ENCODE measurements at regions of chr1 and their contacts with region 1.

Region 1: DNA sequence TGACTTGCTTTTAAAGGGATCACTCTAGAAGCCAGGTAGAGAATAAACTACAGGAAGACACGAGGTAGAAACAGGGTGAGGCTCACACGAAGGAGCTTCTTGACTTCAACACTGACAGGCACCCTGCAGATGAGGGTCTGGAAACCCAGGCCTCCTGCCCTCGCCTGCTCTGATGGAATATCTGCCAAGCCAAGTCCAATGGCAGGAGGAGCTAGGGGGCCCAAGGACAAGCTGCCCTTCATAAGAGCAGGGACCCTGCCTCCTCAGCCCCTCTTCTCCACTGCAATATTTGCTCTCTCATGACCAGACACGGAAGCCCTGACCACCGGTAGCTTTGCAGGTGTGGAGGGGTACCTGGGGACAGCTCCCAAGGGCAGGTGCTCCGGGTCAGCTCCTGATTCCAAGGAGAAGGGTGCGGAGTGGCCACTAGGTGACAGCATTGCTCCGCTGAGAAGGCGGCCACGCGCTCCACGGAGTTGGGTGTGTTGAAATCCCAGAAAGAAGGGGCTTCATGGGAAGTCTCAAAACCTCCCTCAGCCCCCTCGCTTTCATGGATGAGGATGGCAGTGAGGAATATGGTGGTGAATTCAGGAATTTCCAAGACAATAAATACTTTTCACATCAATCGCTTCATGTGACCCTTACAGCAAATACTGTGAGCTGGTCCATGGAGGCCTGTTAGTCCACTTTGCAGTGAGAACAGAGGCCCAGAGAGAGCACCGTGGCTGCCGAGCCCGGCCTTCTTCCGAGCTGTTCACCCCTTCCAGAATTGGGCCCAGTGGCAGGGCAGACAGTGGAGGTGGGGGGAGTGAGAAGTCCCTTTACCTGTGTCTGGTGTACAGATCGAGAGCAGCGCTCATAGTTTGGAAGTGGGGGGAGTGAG is 33.2 kb upstream of the PAX7 start:
- DNase-seq: peak; percentile 46
- H3K4me3 ChIP-seq: no peak overlapping the region
- H3K27ac ChIP-seq: no peak overlapping the region
- H3K4me1 ChIP-seq: no peaks in the 10 kb centered on the region
- H3K27me3 ChIP-seq: peaks cover 0 to 3% of the 10 kb centered on the region in 2 experiments
- CTCF ChIP-seq: peak; percentile 71 to 92
- POLR2A ChIP-seq: no peak

Region 2: DNA sequence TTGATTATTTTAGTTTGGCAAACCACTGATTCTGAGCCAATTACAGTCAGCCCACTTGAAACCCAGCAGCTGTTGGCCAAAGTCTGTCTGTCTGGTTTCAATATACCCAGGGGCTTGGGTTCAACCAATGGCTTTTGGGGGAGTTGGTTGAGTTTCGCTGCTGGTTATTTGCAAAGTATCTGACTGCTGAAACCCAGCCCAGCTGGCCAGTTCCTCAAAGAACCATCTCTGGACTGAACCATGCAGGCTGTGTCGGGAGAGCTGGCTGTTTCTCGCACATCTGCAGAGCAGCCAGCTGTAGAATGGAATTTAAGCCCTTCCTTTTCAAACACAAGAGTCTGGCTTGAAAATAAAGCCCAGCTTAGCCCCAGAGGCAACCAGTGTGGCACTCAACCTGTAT is 32.7 kb before region 1 on chr1:
- CTCF ChIA-PET with region 1: no interaction called
- POLR2A ChIA-PET with region 1: no interaction called
- dilution Hi-C with region 1: no loop called
- intact Hi-C with region 1: no loop called
- DNase-seq: no peak
- H3K4me3 ChIP-seq: no peak overlapping the region
- H3K27ac ChIP-seq: no peak overlapping the region
- H3K4me1 ChIP-seq: no peaks in the 10 kb centered on the region
- H3K27me3 ChIP-seq: no peaks in the 10 kb centered on the region
- CTCF ChIP-seq: no peak
- POLR2A ChIP-seq: no peak

Region 3: GRCh38 chr1:18575620-18576019 is 21.8 kb before region 1 on chr1:
- CTCF ChIA-PET with region 1: interaction called, 12 read pairs
- POLR2A ChIA-PET with region 1: no interaction called
- dilution Hi-C with region 1: no loop called
- intact Hi-C with region 1: no loop called
- DNase-seq: peak; percentile 18
- H3K4me3 ChIP-seq: no peak overlapping the region
- H3K27ac ChIP-seq: no peak overlapping the region
- H3K4me1 ChIP-seq: no peaks in the 10 kb centered on the region
- H3K27me3 ChIP-seq: no peaks in the 10 kb centered on the region
- CTCF ChIP-seq: peak; percentile 39 to 75
- POLR2A ChIP-seq: no peak

Region 4: GRCh38 chr1:18635891-18636595 is 38.6 kb after region 1 on chr1:
- CTCF ChIA-PET with region 1: no interaction called
- POLR2A ChIA-PET with region 1: no interaction called
- dilution Hi-C with region 1: no loop called
- intact Hi-C with region 1: no loop called
- DNase-seq: no peak
- H3K4me3 ChIP-seq: no peak overlapping the region
- H3K27ac ChIP-seq: no peak overlapping the region
- H3K4me1 ChIP-seq: no peaks in the 10 kb centered on the region
- H3K27me3 ChIP-seq: peaks cover 88 to 95% of the 10 kb centered on the region in 2 experiments
- CTCF ChIP-seq: no peak
- POLR2A ChIP-seq: no peak

Region 5: DNA sequence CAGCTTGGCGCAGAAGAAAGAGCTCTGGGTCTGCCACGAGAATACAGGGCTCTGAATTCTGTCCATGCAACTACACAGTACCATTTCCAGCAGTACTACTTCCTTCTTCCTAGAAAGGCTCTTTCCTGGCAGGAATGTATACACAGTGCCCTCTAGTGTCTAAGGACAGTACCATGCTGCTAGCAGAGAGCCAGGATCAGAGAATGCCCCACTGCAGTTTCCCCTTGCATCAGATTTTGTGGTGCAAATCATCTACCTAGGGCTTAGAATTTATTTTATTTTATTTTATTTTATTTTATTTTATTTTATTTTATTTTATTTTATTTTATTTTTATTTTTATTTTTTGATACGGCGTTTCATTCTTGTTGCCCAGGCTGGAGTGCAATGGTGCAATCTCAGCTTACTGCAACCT is 84.0 kb after region 1 on chr1:
- CTCF ChIA-PET with region 1: interaction called, 12 read pairs
- POLR2A ChIA-PET with region 1: no interaction called
- dilution Hi-C with region 1: no loop called
- intact Hi-C with region 1: loop called (anchors 1 kb)
- DNase-seq: no peak
- H3K4me3 ChIP-seq: no peak overlapping the region
- H3K27ac ChIP-seq: no peak overlapping the region
- H3K4me1 ChIP-seq: no peaks in the 10 kb centered on the region
- H3K27me3 ChIP-seq: no peaks in the 10 kb centered on the region
- CTCF ChIP-seq: peak; percentile 31 to 35
- POLR2A ChIP-seq: no peak

Region 6: DNA sequence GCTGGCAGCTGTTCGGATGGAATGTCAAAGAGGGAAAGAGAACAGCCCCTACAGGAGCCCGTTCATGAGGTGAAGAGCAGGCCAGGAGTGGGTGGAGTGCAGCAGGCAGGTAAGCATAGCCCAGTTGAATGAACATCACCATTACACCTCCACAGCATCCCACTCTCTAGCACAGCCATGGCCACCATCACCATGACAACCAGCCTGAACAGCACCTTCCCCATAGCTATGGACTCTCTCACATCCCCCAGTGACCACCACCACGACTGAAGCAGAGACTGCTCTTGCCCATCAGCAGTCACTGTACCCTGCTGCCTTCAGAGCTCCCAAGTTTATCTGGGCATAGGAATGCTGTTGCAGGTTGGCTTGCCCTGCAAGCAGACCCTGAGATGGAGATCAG is 229.0 kb after region 1 on chr1:
- CTCF ChIA-PET with region 1: interaction called, 206 read pairs
- POLR2A ChIA-PET with region 1: no interaction called
- dilution Hi-C with region 1: no loop called
- intact Hi-C with region 1: no loop called
- DNase-seq: no peak
- H3K4me3 ChIP-seq: no peak overlapping the region
- H3K27ac ChIP-seq: no peak overlapping the region
- H3K4me1 ChIP-seq: no peaks in the 10 kb centered on the region
- H3K27me3 ChIP-seq: no peaks in the 10 kb centered on the region
- CTCF ChIP-seq: no peak
- POLR2A ChIP-seq: no peak

Region 7: GRCh38 chr1:19081218-19081893 is 484.0 kb after region 1 on chr1:
- CTCF ChIA-PET with region 1: interaction called, 3 read pairs
- POLR2A ChIA-PET with region 1: no interaction called
- dilution Hi-C with region 1: no loop called
- intact Hi-C with region 1: loop called (anchors 5 kb)
- DNase-seq: peak; percentile 52
- H3K4me3 ChIP-seq: no peak overlapping the region
- H3K27ac ChIP-seq: peak overlapping the region; percentile 84
- H3K4me1 ChIP-seq: peaks cover 42% of the 10 kb centered on the region
- H3K27me3 ChIP-seq: no peaks in the 10 kb centered on the region
- CTCF ChIP-seq: no peak
- POLR2A ChIP-seq: no peak

Region 8: DNA sequence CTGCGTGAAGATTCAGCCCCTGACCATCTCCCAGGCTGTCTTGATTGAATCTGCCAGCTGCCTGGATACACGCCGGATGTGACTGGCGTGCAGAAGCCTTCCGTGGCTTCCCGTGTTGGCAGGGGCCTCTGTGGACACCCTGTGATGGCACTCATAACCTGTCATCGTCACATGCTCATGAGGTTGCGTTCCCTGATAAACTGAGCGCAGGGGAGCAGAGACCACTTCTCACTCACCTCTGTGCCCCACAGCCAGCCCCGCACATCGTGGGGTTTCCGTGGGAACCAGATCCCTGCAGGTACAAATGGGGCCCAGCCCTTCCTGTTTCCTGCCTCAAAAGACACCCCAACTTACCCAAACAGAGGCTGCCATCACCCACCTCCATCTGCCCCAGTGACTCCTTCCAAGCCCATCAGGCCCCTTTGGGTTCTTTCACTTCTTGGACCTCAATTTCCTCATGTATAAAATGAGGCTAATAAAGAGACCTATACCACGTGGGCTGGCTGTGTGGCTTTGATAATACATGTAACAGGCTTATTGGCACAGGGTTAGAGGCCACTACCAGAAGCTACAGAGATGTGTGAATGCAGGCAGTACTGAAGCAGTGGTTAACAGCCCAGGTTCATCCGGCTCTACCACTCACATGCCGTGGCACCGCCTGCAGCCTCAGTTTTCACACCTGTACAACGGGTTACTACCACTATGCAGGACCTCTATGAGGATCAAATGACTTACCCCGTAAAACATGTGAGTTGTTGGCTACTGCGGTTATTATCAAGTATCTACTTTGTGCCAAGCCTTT is 1090.8 kb after region 1 on chr1:
- CTCF ChIA-PET with region 1: no interaction called
- POLR2A ChIA-PET with region 1: no interaction called
- dilution Hi-C with region 1: no loop called
- intact Hi-C with region 1: no loop called
- DNase-seq: no peak
- H3K4me3 ChIP-seq: no peak overlapping the region
- H3K27ac ChIP-seq: no peak overlapping the region
- H3K4me1 ChIP-seq: no peaks in the 10 kb centered on the region
- H3K27me3 ChIP-seq: no peaks in the 10 kb centered on the region
- CTCF ChIP-seq: no peak
- POLR2A ChIP-seq: no peak